ENCODE measurements at regions of chr4 and their contacts with region 1.

Region 1: DNA sequence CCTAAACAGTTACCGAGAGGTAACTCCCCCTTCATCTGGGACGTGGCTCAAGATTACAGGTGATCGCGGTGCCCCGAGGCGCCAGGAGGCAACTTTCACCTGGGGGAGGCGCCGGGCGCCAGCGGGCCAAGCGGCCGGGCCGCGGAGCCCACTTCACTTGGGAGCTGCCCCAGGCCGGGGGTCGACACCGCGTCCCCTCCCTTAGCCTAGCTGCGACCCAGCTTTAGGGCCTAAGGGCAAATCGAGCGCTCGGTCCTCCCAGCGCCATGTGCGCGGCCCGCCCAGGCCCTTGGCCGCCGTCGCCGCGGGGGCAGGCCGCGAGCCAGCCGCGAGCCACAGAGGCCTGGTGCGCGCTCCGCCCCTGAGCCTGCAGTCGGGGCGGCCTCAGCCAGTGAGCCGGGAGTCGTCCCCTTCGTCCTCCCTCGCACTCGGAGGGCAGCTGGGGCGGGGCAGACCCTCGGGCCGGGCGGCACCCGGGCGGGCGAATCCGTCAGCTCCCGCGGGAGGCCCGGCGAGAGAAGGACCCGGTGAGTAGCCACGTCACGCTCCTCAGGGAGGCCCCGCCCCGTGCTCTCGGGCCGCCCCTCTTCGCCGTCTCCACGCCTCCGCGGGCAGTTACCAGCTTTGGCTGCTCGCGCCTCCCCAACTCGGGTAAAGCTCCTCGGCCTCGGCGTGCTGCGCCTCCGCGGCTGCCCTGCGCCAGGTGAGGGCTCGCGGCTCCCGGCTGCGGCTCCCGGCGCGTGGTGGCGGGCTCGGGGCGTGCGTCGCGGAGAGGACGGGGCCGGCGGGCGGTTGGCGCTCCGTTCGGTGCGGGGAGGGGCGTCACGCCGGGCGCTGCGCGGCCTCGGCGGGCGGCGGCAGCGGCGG is at the start of gene LARP1B:
- DNase-seq: peak; percentile 93
- H3K4me3 Mint-ChIP-seq: peak within 1 kb of the TSS; percentile 88
- H3K27ac Mint-ChIP-seq: peak within 1 kb of the TSS; percentile 95
- H3K4me1 Mint-ChIP-seq: peaks cover 6% of the 10 kb centered on the region
- H3K27me3 Mint-ChIP-seq: no peaks in the 10 kb centered on the region
- total RNA-seq, gene LARP1B: 33.3 and 34.5 TPM in 2 replicates

Region 2: DNA sequence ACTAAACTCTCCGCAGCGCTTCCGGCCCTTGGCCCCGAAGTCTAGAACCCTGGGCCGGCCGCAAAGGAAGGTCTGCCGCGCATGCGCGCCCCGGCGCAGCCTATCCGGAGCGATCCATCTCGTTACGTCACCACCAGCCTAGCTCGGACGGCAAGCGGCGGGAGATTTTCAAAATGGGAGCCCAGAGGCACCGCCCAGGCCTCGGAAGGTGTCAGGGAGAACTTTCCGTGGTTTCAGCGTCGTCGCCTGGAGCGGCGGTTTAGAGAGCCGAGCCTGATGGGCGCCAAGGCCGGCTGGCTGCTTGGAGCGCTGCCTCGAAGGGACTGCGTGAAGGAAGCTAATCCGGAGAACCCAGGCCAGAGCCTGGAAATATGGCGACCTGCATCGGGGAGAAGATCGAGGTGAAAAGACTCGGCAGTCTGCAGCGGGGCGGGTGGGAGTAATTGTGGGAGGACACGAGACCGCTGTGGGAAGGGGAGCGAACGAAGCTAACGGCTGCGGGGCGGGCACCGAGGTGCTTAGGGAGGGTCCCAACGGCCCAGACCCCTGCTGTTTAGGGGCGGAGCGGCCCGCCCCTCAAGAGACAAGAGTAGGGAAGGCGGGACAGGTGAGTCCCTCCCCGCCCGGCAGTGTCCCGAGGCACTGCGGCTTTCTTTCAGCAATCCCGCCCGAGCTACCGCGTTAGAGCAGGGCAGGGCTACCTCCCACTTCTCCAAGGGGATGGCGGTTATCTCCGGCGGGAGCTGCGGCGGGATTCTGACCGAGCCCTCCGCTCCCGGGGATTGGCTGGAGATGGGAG is 180.0 kb before region 1 on chr4 and contains the start of gene PLK4:
- intact Hi-C with region 1: loop called (anchors 1 kb)
- DNase-seq: peak; percentile 96
- H3K4me3 Mint-ChIP-seq: peak within 1 kb of the TSS; percentile 91
- H3K27ac Mint-ChIP-seq: peak within 1 kb of the TSS; percentile 91
- H3K4me1 Mint-ChIP-seq: peaks cover 31% of the 10 kb centered on the region
- H3K27me3 Mint-ChIP-seq: no peaks in the 10 kb centered on the region
- total RNA-seq, gene PLK4: 40.7 and 41.2 TPM in 2 replicates

Region 3: GRCh38 chr4:127957105-127957504 is 103.8 kb before region 1 on chr4:
- intact Hi-C with region 1: no loop called
- DNase-seq: no peak
- H3K4me3 Mint-ChIP-seq: no peak overlapping the region
- H3K27ac Mint-ChIP-seq: no peak overlapping the region
- H3K4me1 Mint-ChIP-seq: no peaks in the 10 kb centered on the region
- H3K27me3 Mint-ChIP-seq: no peaks in the 10 kb centered on the region

Region 4: DNA sequence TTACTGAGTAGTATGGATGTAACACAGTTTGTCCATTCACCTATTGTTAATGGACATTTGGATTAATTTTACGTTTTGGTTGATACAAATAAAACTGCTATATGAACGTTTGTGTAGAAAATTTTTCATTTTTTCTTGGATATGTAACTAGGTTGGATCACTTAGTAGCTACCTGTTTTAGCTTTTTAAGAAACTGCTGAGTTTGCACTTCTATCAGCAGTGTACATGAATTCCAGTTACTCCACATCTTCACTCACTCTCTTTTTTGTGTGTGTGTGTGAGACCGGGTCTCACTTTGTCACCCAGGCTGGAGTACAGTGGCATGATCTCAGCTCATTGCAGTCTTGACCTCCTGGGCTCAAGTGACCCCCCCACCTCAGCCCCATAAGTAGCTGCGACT is 15.5 kb after region 1 on chr4:
- intact Hi-C with region 1: no loop called
- DNase-seq: no peak
- H3K4me3 Mint-ChIP-seq: no peak overlapping the region
- H3K27ac Mint-ChIP-seq: no peak overlapping the region
- H3K4me1 Mint-ChIP-seq: no peaks in the 10 kb centered on the region
- H3K27me3 Mint-ChIP-seq: no peaks in the 10 kb centered on the region

Region 5: GRCh38 chr4:128177498-128177897 is 116.6 kb after region 1 on chr4:
- intact Hi-C with region 1: loop called (anchors 2 kb)
- DNase-seq: no peak
- H3K4me3 Mint-ChIP-seq: no peak overlapping the region
- H3K27ac Mint-ChIP-seq: no peak overlapping the region
- H3K4me1 Mint-ChIP-seq: peaks cover 8% of the 10 kb centered on the region
- H3K27me3 Mint-ChIP-seq: no peaks in the 10 kb centered on the region

Measured in activated T-helper 1 cell treated with anti-CD3 and anti-CD28 coated beads, Interleukin-12 subunit alpha, Interleukin-12 subunit beta, Interleukin-2, Interleukin-4 antibody, amounts not matched to agents 30 ng/mL and 10 ng/mL and 1 ng/mL, durations not matched to agents 14 hours and 24 hours and 36 hours (primary cell).